ENCODE measurements at regions of chr12 and their contacts with region 1.

Region 1: DNA sequence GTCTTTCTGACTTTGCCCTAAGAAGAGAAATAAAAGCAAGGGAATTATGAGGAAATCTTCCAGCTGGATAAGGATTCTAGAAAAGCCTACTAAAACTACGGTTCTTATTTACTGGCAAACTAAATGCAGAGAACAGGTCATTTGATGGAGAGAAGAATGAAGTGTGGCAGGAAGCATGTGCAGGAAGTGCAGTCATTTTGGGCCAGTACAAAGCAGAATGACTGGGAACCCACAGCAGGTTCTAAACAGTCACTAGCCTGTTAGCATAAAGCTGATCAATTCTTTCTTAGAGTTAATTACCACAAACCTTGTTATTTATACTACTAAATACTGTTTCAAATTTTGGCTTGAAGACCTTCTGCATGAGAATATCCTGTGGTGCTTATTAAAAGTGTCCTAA is 36.7 kb downstream of the CFAP54 start:
- DNase-seq: no peak
- ATAC-seq: no peak
- H3K4me3 Mint-ChIP-seq: no peak overlapping the region
- H3K27ac Mint-ChIP-seq: no peak overlapping the region
- H3K4me1 Mint-ChIP-seq: peaks cover 20% of the 10 kb centered on the region
- H3K27me3 Mint-ChIP-seq: no peaks in the 10 kb centered on the region
- CTCF ChIP-seq: no peak

Region 2: DNA sequence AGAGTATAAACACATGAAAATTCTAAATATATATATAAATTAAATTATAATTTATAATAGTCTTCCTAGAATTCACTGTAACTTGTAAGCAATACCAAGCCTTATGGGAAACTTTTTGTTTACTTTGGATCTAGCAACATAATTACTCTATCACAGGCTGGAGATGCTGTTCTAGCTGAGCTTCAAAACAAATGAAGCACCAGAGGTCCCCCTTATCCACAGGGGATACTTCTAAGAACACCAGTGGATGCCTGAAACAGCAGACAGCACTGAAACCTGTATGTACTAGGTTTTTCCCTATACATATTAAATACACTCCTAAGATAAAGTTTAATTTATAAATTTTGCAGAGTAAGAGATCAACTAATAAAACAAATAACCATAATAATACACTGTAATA is 222.5 kb before region 1 on chr12:
- CTCF ChIA-PET with region 1: no interaction called
- POLR2A ChIA-PET with region 1: interaction called, 16 read pairs
- DNase-seq: no peak
- ATAC-seq: no peak
- H3K4me3 Mint-ChIP-seq: no peak overlapping the region
- H3K27ac Mint-ChIP-seq: no peak overlapping the region
- H3K4me1 Mint-ChIP-seq: peaks cover 15% of the 10 kb centered on the region
- H3K27me3 Mint-ChIP-seq: no peaks in the 10 kb centered on the region
- CTCF ChIP-seq: no peak

Region 3: GRCh38 chr12:96495155-96495554 is 31.0 kb before region 1 on chr12:
- CTCF ChIA-PET with region 1: no interaction called
- POLR2A ChIA-PET with region 1: no interaction called
- DNase-seq: no peak
- ATAC-seq: no peak
- H3K4me3 Mint-ChIP-seq: no peak overlapping the region
- H3K27ac Mint-ChIP-seq: no peak overlapping the region
- H3K4me1 Mint-ChIP-seq: peaks cover under 1% of the 10 kb centered on the region; the same call in 1 of the 2 replicates
- H3K27me3 Mint-ChIP-seq: no peaks in the 10 kb centered on the region
- CTCF ChIP-seq: no peak

Region 4: GRCh38 chr12:96506776-96507175 is 19.3 kb before region 1 on chr12:
- CTCF ChIA-PET with region 1: no interaction called
- POLR2A ChIA-PET with region 1: no interaction called
- DNase-seq: no peak
- ATAC-seq: no peak
- H3K4me3 Mint-ChIP-seq: no peak overlapping the region
- H3K27ac Mint-ChIP-seq: no peak overlapping the region
- H3K4me1 Mint-ChIP-seq: peaks cover 1% of the 10 kb centered on the region; the same call in 1 of the 2 replicates
- H3K27me3 Mint-ChIP-seq: no peaks in the 10 kb centered on the region
- CTCF ChIP-seq: no peak